ENCODE measurements at regions of chr7 and their contacts with region 1.

Region 1: GRCh38 chr7:101138213-101138870 is 11.4 kb downstream of the SERPINE1 start:
- DNase-seq: peak; percentile 69 to 82
- ATAC-seq: peak; percentile 84 to 94 (median 92)
- H3K4me3 ChIP-seq: peak overlapping the region in 3 of 10 donors; percentile 15 to 33 (median 26)
- H3K27ac ChIP-seq: peak overlapping the region in 7 of 10 donors; percentile 22 to 84 (median 52)
- H3K4me1 ChIP-seq: peaks cover 7 to 42% (median 13%) of the 10 kb centered on the region in 9 donors
- H3K27me3 ChIP-seq: peaks cover 0 to 9% (median 0%) of the 10 kb centered on the region in 7 donors
- CTCF ChIP-seq: peak; percentile 69 to 90 (median 84)

Region 2: DNA sequence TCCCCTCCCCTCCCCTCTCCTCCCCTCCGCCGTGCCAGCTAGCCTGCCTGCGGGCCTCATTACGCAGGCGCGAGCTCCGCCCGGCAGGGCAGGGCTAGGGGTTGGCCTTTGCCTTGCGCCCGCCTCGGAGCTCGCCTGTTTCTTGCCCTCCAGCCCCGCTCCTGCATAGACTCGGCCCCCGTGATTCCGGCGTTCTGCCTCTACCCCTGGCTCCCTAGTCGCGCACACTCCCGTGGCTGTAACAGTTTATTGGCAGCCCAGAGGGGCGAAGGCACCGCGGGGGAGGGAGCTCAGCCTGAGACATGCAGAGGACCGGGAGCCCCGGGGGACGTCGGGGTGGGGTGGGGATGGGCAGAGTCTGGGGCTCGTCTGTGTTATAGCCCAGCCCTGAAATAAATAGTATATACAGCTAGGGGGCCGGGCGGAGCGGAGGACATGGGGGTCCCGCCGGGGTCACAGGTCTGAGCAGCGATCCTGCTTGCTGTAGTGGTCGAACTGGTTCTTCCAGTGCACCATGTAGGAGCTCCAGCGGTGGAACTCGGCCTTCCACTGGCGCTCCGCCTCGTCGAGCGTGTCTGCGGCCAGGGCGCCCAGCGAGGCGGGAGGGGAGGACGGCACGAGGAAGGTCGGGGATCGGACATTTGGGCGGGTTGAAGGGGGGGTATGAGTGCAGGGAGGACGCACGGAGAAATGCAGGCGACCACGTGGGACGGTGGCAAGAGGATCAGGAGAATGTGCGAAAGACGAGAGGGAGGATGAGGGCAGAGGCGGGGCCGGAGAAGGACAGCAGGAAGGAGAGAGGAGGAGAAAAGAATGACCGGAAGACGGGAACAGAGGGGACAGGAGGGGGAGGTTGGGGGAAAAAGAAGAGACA is 248.3 kb before region 1 on chr7:
- intact Hi-C with region 1: loop called in 1 of 10 experiments (anchors 10 kb)
- DNase-seq: peak; percentile 93 to 94
- ATAC-seq: peak; percentile 90 to 97 (median 94)
- H3K4me3 ChIP-seq: peak overlapping the region; percentile 55 to 82 (median 75)
- H3K27ac ChIP-seq: peak overlapping the region; percentile 78 to 91 (median 88)
- H3K4me1 ChIP-seq: peaks cover 16 to 52% (median 38%) of the 10 kb centered on the region in 9 donors
- H3K27me3 ChIP-seq: peaks cover 2 to 46% (median 7%) of the 10 kb centered on the region in 7 donors
- CTCF ChIP-seq: peak in 4 of 9 donors; percentile 7 to 23 (median 21)

Region 3: DNA sequence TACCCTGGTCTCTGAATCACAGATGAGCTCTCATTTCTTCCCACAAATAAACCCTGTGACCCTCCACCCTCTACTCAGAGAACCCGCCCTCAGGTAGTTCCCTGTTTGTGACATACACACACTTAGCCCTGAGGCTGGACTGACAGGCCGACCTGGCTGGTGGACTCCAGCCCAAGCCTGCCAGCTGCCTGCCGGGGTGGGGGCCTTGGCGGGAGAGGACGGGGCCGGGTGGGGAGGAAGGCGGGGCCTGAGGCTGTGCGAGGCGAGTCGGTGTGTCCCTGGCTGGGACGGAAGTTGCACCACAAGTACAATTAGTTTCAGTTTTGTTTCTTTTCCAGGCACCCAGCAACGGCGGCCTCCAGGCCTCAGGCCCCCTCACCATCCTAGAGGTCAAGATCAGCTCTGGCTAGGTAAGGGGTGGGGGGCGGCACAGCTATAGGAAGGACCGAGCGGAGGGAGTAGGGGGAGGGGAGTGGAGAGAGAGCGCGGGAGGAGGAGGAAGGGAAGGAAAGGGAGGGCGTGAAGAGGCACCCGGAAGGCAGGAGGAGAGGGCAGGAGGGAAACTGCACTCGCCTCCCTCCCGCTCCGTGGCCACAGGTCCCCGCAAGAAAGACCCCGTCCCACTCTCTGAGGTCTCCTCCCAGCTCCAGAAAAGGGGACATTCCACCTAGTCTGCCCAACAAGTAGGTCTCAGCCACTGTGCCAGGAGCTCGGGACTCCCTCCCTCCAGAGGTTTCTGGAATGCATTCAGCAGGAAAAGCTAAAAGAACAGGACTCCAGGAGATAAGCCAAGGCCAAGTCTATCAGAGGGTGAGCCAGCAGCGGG is 53.0 kb before region 1 on chr7 and contains the start of gene TRIM56:
- intact Hi-C with region 1: loop called in 1 of 10 experiments (anchors 1 kb)
- DNase-seq: peak; percentile 86 to 89
- ATAC-seq: peak; percentile 92 to 96 (median 96)
- H3K4me3 ChIP-seq: peak within 1 kb of the TSS; percentile 63 to 91 (median 76)
- H3K27ac ChIP-seq: peak within 1 kb of the TSS; percentile 91 to 98 (median 94)
- H3K4me1 ChIP-seq: peaks cover 0 to 50% (median 33%) of the 10 kb centered on the region in 9 donors
- H3K27me3 ChIP-seq: no peaks in the 10 kb centered on the region
- CTCF ChIP-seq: no peak
- total RNA-seq, gene TRIM56: 12.8 to 28.4 (median 16.7) TPM

Region 4: DNA sequence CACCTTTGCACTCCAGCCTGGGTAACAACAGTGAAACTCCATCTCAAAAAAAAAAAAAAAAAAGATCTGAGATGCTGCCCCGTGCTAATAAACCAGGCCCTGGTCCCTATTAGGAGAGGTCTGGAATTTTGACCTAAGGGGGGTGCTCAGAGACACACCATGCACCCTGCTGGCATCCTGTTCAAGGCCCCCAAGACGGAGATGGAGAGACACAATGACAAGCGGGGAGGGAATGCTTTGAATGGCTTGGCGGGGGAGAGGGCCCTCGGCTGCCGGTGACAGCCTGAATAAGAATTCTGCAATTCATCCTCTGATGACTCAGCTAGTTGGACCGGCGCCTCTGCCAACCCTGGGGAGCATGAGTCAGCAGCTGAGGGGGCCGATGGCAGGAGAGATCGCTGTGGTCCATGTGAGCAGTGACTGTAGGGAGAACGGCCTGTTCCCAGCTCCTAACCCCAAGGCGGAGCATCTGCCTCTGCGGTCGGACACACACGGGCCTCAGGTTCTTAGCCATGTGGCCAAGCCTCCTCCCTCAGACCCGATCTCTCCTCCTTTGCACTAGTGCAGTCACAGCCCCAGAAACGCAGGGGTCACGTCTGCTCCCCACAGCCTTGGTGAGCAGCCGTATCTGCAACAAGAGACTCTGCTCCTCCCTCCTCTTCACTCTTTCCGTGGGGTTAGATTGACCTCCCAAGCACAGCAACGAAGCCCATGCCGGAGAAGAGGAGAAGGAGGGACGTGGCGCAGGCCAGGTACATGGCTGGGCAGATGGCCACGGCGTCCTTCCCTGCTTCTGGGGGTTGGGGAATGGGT is 38.2 kb before region 1 on chr7:
- intact Hi-C with region 1: loop called in 8 of 10 experiments (anchors 2 to 5 kb)
- DNase-seq: peak; percentile 90 to 91
- ATAC-seq: peak; percentile 89 to 96 (median 94)
- H3K4me3 ChIP-seq: no peak overlapping the region
- H3K27ac ChIP-seq: peak overlapping the region in 9 of 10 donors; percentile 9 to 78 (median 63)
- H3K4me1 ChIP-seq: peaks cover 0 to 41% (median 24%) of the 10 kb centered on the region in 9 donors
- H3K27me3 ChIP-seq: peaks cover 0 to 14% (median 0%) of the 10 kb centered on the region in 7 donors
- CTCF ChIP-seq: no peak

Region 5: GRCh38 chr7:101287032-101287431 is 148.7 kb after region 1 on chr7:
- intact Hi-C with region 1: loop called in 3 of 10 experiments (anchors 5 kb)
- DNase-seq: no peak
- ATAC-seq: no peak
- H3K4me3 ChIP-seq: no peak overlapping the region
- H3K27ac ChIP-seq: no peak overlapping the region
- H3K4me1 ChIP-seq: peaks cover 0 to 4% (median 0%) of the 10 kb centered on the region in 9 donors
- H3K27me3 ChIP-seq: peaks cover 0 to 39% (median 16%) of the 10 kb centered on the region in 7 donors
- CTCF ChIP-seq: no peak